Panc1 (cell line): ENCODE measurements at regions of chr5 and their contacts with region 1.

Region 1: GRCh38 chr5:141475625-141476131 is at the start of gene PCDHGC3:
- DNase-seq: peak; percentile 74
- ATAC-seq: peak; percentile 99
- H3K4me3 ChIP-seq: peak within 1 kb of the TSS; percentile 90 to 93
- H3K27ac ChIP-seq: peak within 1 kb of the TSS; percentile 89
- H3K4me1 ChIP-seq: peaks cover 12% of the 10 kb centered on the region
- H3K27me3 ChIP-seq: no peaks in the 10 kb centered on the region
- CTCF ChIP-seq: peak; percentile 65
- total RNA-seq, gene PCDHGC3: 54.1 TPM

Region 2: GRCh38 chr5:141524604-141525597 is 49.2 kb after region 1 on chr5:
- CTCF ChIA-PET with region 1: interaction called, 5 read pairs
- POLR2A ChIA-PET with region 1: no interaction called
- in situ Hi-C with region 1: no loop called
- intact Hi-C with region 1: loop called (anchors 1 kb)
- DNase-seq: peak; percentile 84
- ATAC-seq: peak; percentile 90
- H3K4me3 ChIP-seq: no peak overlapping the region
- H3K27ac ChIP-seq: peak overlapping the region; percentile 51
- H3K4me1 ChIP-seq: peaks cover 35% of the 10 kb centered on the region
- H3K27me3 ChIP-seq: no peaks in the 10 kb centered on the region
- CTCF ChIP-seq: peak; percentile 100

Region 3: GRCh38 chr5:141564216-141564692 is 88.6 kb after region 1 on chr5:
- CTCF ChIA-PET with region 1: interaction called, 12 read pairs
- POLR2A ChIA-PET with region 1: no interaction called
- in situ Hi-C with region 1: no loop called
- intact Hi-C with region 1: no loop called
- DNase-seq: peak; percentile 87
- ATAC-seq: peak; percentile 90
- H3K4me3 ChIP-seq: no peak overlapping the region
- H3K27ac ChIP-seq: peak overlapping the region; percentile 83
- H3K4me1 ChIP-seq: peaks cover 12% of the 10 kb centered on the region
- H3K27me3 ChIP-seq: no peaks in the 10 kb centered on the region
- CTCF ChIP-seq: peak; percentile 91